ENCODE measurements at regions of chr1 and their contacts with region 1.

Region 1: GRCh38 chr1:147890177-147890790 is 12.3 kb upstream of the GJA8 start:
- DNase-seq: peak; percentile 60 to 62
- ATAC-seq: peak; percentile 93 to 97
- H3K4me3 ChIP-seq: no peak overlapping the region
- H3K27ac ChIP-seq: no peak overlapping the region
- H3K4me1 ChIP-seq: no peaks in the 10 kb centered on the region
- CTCF ChIP-seq: peak; percentile 70
- EP300 ChIP-seq: no peak
- POLR2A ChIP-seq: no peak
- RAD21 ChIP-seq: peak; percentile 79 to 85

Region 2: GRCh38 chr1:147273409-147274336 is 616.6 kb before region 1 on chr1:
- CTCF ChIA-PET with region 1: interaction called, 24 read pairs
- POLR2A ChIA-PET with region 1: no interaction called
- DNase-seq: peak; percentile 59 to 61
- ATAC-seq: peak; percentile 72 to 75
- H3K4me3 ChIP-seq: no peak overlapping the region
- H3K27ac ChIP-seq: peak overlapping the region in 1 of 2 experiments; percentile 36; a peak in 2 of 6 replicates
- H3K4me1 ChIP-seq: peaks cover 13% of the 10 kb centered on the region
- CTCF ChIP-seq: peak; percentile 60
- EP300 ChIP-seq: no peak
- POLR2A ChIP-seq: no peak
- RAD21 ChIP-seq: peak; percentile 58 to 64

Region 3: GRCh38 chr1:147640553-147641165 is 249.6 kb before region 1 on chr1:
- CTCF ChIA-PET with region 1: interaction called, 41 read pairs
- POLR2A ChIA-PET with region 1: no interaction called
- DNase-seq: peak; percentile 68 to 73
- ATAC-seq: peak; percentile 95 to 99
- H3K4me3 ChIP-seq: no peak overlapping the region
- H3K27ac ChIP-seq: no peak overlapping the region
- H3K4me1 ChIP-seq: peaks cover 6% of the 10 kb centered on the region; the same call in 1 of the 3 replicates
- CTCF ChIP-seq: peak; percentile 74
- EP300 ChIP-seq: no peak
- POLR2A ChIP-seq: no peak
- RAD21 ChIP-seq: peak; percentile 57 to 60

Region 4: DNA sequence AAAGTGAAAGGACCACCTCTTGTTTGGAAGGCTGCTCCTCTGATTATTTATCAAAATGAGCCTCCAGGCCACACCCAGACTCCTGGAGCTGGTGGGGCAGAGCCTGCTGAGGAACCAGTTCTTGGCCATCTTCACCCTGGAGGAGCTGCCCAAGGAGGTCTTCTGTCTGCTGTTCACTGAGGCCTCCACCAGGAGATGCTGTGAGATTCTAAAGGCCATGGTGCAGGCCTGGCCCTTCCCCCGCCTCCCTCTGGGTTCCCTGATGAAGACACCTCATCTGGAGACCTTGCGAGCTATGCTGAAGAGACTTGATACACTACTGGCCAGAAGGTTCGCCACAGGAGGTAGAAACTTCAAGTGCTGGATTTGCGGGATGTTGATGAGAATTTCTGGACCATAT is 49.4 kb before region 1 on chr1:
- CTCF ChIA-PET with region 1: interaction called, 11 read pairs
- POLR2A ChIA-PET with region 1: no interaction called
- DNase-seq: peak; percentile 10 to 32
- ATAC-seq: peak; percentile 43 to 79; a peak in 4 of 6 replicates
- H3K4me3 ChIP-seq: no peak overlapping the region
- H3K27ac ChIP-seq: no peak overlapping the region
- H3K4me1 ChIP-seq: no peaks in the 10 kb centered on the region
- CTCF ChIP-seq: no peak
- EP300 ChIP-seq: no peak
- POLR2A ChIP-seq: no peak
- RAD21 ChIP-seq: no peak

Region 5: GRCh38 chr1:147902183-147902845 is 12.0 kb after region 1 on chr1 and contains the start of gene GJA8:
- CTCF ChIA-PET with region 1: interaction called, 52 read pairs
- POLR2A ChIA-PET with region 1: no interaction called
- DNase-seq: no peak
- ATAC-seq: no peak
- H3K4me3 ChIP-seq: no peak within 1 kb of the TSS
- H3K27ac ChIP-seq: no peak within 1 kb of the TSS
- H3K4me1 ChIP-seq: no peaks in the 10 kb centered on the region
- CTCF ChIP-seq: no peak
- EP300 ChIP-seq: no peak
- POLR2A ChIP-seq: no peak
- RAD21 ChIP-seq: no peak
- polyA plus RNA-seq, gene GJA8: not detected in 2 replicates